Right cardiac atrium (tissue), 5 donors: ENCODE measurements at regions of chr14 and their contacts with region 1.

Region 1: GRCh38 chr14:60561845-60562746 is 53.1 kb downstream of the SIX6 start:
- DNase-seq: peak; percentile 45 to 68 (median 65)
- ATAC-seq: peak; percentile 90 to 91
- H3K4me3 ChIP-seq: no peak overlapping the region
- H3K27ac ChIP-seq: no peak overlapping the region
- H3K4me1 ChIP-seq: peaks cover 2% of the 10 kb centered on the region
- H3K27me3 ChIP-seq: no peaks in the 10 kb centered on the region

Region 2: DNA sequence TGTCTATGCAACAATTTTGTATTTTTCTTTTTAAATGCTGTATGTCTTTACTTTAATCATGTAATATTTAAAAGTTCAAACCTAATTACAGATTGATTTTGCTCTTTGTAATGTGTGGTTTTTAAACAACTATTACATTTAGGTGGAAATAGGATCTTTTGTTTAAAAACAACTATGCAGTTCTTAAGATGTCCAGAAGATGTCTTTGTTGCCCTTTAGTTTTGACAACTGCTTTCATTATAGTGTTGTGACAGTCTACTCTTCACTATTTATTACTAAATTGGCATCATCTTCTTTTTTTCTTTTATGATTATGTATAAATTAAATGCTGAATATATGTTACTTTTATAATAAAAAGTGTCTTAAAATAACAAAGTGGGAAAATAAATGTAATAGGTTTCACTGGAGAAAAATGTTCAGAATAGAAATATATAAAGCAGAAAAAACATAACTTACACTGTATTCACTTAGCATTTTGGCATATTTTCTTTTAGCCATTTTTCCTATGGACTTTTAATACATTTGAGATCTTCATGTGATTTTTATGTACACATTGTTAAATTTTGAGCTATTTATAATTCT is 497.5 kb before region 1 on chr14:
- intact Hi-C with region 1: loop called in 1 of 4 experiments (anchors 10 kb)
- DNase-seq: no peak
- ATAC-seq: no peak
- H3K4me3 ChIP-seq: no peak overlapping the region
- H3K27ac ChIP-seq: no peak overlapping the region
- H3K4me1 ChIP-seq: no peaks in the 10 kb centered on the region
- H3K27me3 ChIP-seq: no peaks in the 10 kb centered on the region

Region 3: DNA sequence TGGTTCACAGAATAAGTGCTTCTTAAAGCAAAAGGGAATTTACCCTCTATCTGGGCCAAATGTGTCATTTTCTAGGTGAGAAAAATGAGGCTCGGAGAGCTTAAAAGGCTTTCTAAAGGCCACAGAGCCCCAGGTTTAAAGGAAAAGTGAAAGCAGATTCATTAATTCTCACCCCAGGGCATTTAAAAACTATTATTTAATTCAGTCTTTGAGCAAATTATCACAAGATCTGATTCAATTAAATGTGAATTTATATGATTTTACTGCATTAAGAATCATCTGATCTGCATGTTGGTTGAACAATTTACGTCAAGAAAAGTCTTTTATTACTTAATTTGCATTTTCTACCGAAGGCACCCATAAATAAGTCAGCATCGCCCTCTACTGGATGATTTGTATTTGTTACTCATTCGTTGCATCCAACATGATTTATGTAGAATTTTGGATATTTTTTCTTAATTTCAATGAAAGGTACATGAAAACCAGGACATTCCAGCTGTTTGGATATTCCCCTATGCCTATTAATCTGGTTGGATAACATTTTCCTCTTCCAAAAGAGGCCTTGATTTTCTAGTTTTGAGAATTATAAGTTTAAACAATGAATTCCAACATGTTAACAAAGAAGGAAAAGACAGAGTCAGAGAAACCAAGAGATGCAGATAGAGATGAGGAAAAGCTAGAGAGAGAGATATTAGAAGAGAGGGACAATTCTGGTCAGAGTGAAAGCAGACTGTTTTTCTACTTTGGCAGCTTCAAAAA is 377.8 kb before region 1 on chr14:
- intact Hi-C with region 1: loop called in 1 of 4 experiments (anchors 10 kb)
- DNase-seq: no peak
- ATAC-seq: peak; percentile 33 to 40
- H3K4me3 ChIP-seq: peak overlapping the region; percentile 73
- H3K27ac ChIP-seq: no peak overlapping the region
- H3K4me1 ChIP-seq: no peaks in the 10 kb centered on the region
- H3K27me3 ChIP-seq: no peaks in the 10 kb centered on the region

Region 4: GRCh38 chr14:60349663-60350365 is 212.3 kb before region 1 on chr14:
- intact Hi-C with region 1: loop called in 3 of 4 experiments (anchors 5 to 10 kb)
- DNase-seq: peak in 1 of 3 donors; percentile 35
- ATAC-seq: peak; percentile 51 to 68
- H3K4me3 ChIP-seq: no peak overlapping the region
- H3K27ac ChIP-seq: no peak overlapping the region
- H3K4me1 ChIP-seq: no peaks in the 10 kb centered on the region
- H3K27me3 ChIP-seq: no peaks in the 10 kb centered on the region

Region 5: DNA sequence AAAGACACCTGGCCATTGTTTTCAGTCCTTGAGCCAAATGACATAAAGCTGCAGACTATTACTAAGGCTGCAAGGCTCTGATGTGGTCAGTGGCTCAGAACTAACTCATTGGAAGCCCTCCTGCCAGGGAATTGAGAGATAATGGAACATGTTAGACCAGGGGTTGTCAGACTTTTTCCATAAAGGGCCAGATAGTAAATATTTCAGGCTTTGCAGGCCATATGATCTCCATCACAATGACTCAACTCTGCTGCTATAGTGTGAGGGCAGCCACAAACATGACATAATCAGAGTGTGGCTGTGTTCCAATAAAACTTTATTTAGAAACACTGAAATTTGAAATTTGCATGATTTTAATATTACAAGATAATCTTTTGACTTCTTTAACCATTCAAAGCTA is 578.8 kb after region 1 on chr14:
- intact Hi-C with region 1: loop called in 1 of 4 experiments (anchors 5 kb)
- DNase-seq: no peak
- ATAC-seq: no peak
- H3K4me3 ChIP-seq: no peak overlapping the region
- H3K27ac ChIP-seq: no peak overlapping the region
- H3K4me1 ChIP-seq: no peaks in the 10 kb centered on the region
- H3K27me3 ChIP-seq: no peaks in the 10 kb centered on the region